ENCODE measurements at regions of chrX and their contacts with region 1.

Region 1: DNA sequence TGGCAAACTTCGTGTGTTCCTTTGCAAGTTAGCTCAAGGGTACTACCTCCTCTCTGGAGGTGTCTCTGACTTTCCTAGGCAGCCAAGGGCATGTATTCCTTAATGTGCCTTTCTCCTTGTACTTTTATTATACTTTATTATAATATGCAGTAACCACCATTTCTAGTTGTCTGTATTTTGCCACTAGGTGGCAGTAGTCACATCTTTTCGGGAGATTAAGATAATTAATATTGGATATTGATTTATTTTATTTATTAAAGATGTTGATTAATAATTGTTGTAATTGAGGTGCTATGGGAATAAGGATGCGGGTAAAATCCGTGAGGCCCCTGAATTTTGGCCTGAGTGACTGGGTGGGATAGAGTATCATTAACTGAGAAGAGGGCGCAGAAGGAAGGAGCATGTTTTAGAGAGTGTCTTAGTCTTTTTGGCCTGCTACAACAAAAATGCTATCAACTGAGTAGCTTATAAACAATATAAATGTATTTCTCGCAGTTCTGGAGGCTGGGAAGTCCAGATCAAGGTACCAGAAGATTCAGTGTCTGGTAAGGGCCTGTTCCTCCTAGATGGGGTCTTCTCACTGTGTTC is 153.3 kb downstream of the TMEM164 start:
- DNase-seq: no peak
- H3K4me3 ChIP-seq: no peak overlapping the region
- H3K27ac ChIP-seq: no peak overlapping the region
- H3K4me1 ChIP-seq: peaks cover 0 to 11% (median 4%) of the 10 kb centered on the region in 6 donors
- H3K27me3 ChIP-seq: no peaks in the 10 kb centered on the region
- CTCF ChIP-seq: peak in 10 of 11 experiments; percentile 11 to 70 (median 49)
- POLR2A ChIP-seq: no peak

Region 2: GRCh38 chrX:110204986-110205385 is 48.7 kb after region 1 on chrX:
- intact Hi-C with region 1: no loop called
- DNase-seq: no peak
- H3K4me3 ChIP-seq: no peak overlapping the region
- H3K27ac ChIP-seq: no peak overlapping the region
- H3K4me1 ChIP-seq: no peaks in the 10 kb centered on the region
- H3K27me3 ChIP-seq: no peaks in the 10 kb centered on the region
- CTCF ChIP-seq: no peak
- POLR2A ChIP-seq: no peak

Region 3: DNA sequence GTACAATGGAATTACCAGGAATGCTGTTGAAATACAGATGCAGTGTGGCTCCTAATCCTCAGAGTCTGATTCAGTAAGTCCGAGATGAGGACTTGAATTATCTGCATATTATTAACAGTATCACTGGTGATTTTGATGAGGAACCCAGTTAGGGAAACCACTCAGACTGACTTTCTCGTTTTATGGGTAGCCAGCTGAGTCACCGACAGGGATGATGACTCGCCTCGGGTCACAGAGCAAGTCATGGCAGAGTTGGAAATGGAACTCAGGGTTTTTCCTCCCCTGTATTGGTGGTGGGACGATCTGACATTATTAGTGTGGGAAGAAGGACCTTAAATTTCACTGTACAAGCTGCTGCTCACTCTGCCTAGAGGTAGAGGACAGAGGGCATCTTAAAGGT is 253.7 kb after region 1 on chrX:
- intact Hi-C with region 1: loop called (anchors 2 kb)
- DNase-seq: no peak
- H3K4me3 ChIP-seq: no peak overlapping the region
- H3K27ac ChIP-seq: no peak overlapping the region
- H3K4me1 ChIP-seq: peaks cover 0 to 3% (median 0%) of the 10 kb centered on the region in 6 donors
- H3K27me3 ChIP-seq: peaks cover 0 to 31% (median 0%) of the 10 kb centered on the region in 7 donors
- CTCF ChIP-seq: no peak
- POLR2A ChIP-seq: no peak

Region 4: DNA sequence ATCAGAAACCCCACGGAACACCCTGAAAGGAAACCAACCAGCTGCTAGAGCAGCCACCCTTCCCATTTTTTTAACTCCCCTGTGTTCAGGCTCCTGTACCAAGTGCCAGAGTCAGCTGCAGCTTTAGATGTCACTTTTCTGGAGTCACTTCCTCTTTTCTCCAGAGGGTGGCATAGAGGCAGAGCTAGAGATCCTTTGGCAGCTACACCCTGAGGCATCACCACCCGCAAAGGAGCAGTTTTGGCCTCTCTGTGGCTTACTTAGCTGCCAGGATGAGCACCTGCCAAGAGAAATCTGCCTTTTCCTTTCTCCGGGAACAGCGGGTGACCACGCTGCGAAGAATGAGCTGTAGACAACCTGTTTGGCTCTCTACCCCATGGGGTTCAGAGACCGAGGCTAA is 697.3 kb after region 1 on chrX:
- intact Hi-C with region 1: loop called (anchors 10 kb)
- DNase-seq: no peak
- H3K4me3 ChIP-seq: no peak overlapping the region
- H3K27ac ChIP-seq: no peak overlapping the region
- H3K4me1 ChIP-seq: no peaks in the 10 kb centered on the region
- H3K27me3 ChIP-seq: peaks cover 0 to 10% (median 0%) of the 10 kb centered on the region in 7 donors
- CTCF ChIP-seq: no peak
- POLR2A ChIP-seq: no peak